ENCODE measurements at regions of chr13 and their contacts with region 1.

Region 1: DNA sequence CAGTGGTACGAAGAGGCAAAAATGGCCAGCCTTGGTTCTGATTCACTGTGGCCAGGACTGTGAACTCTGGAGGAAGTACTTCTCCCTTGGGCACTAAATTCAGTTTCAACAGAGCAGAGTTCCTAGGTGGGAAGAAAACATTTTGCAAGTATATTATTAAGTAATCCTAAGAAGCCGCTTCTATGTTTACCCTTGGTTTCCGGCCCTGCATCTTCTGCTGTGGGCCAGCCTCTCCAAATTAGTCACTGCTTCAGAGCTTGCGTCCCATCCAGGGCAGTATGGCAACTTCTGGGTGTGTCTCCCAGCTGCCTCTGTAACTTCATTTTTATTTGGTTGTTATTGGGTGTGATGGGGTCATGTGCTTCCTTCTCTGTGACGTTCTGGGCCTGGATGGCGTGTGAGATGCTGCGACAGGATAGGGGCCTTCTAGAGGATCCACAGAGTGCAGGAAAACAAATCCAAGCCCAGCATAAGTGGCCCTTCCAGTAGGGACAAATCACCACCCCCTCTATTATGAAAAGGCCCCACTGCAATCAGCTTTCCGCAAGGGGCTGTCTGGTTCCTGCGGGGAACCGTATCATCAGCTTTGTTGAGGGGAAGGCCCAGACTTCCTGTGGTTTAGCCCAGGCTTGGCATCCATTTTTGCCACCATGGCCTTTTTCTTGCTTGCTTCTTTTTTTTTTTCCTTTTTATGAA is 55.1 kb upstream of the C1QTNF9 start:
- DNase-seq: peak; percentile 78 to 93 (median 83)
- H3K4me3 ChIP-seq: peak overlapping the region; percentile 94 to 98
- H3K4me3 Mint-ChIP-seq: peak overlapping the region; percentile 92 to 99 (median 97)
- H3K27ac ChIP-seq: peak overlapping the region; percentile 87
- H3K27ac Mint-ChIP-seq: peak overlapping the region; percentile 95 to 100 (median 97)
- H3K4me1 ChIP-seq: peaks cover 88% of the 10 kb centered on the region
- H3K4me1 Mint-ChIP-seq: peaks cover 62 to 99% (median 81%) of the 10 kb centered on the region in 4 donors
- H3K27me3 ChIP-seq: no peaks in the 10 kb centered on the region
- H3K27me3 Mint-ChIP-seq: no peaks in the 10 kb centered on the region

Region 2: GRCh38 chr13:23639674-23640073 is 614.6 kb before region 1 on chr13:
- CTCF ChIA-PET with region 1: no interaction called
- POLR2A ChIA-PET with region 1: no interaction called
- intact Hi-C with region 1: no loop called
- DNase-seq: no peak
- H3K4me3 ChIP-seq: no peak overlapping the region
- H3K4me3 Mint-ChIP-seq: no peak overlapping the region
- H3K27ac ChIP-seq: no peak overlapping the region
- H3K27ac Mint-ChIP-seq: no peak overlapping the region
- H3K4me1 ChIP-seq: no peaks in the 10 kb centered on the region
- H3K4me1 Mint-ChIP-seq: no peaks in the 10 kb centered on the region
- H3K27me3 ChIP-seq: no peaks in the 10 kb centered on the region
- H3K27me3 Mint-ChIP-seq: no peaks in the 10 kb centered on the region

Region 3: GRCh38 chr13:24264976-24265375 is 10.7 kb after region 1 on chr13:
- CTCF ChIA-PET with region 1: interaction called, 310 read pairs
- POLR2A ChIA-PET with region 1: interaction called, 1,361 read pairs
- intact Hi-C with region 1: loop called (anchors 1 kb)
- DNase-seq: peak; percentile 83 to 93 (median 84)
- H3K4me3 ChIP-seq: peak overlapping the region; percentile 2 to 39
- H3K4me3 Mint-ChIP-seq: peak overlapping the region; percentile 68 to 92 (median 86)
- H3K27ac ChIP-seq: peak overlapping the region; percentile 73
- H3K27ac Mint-ChIP-seq: peak overlapping the region; percentile 98 to 99 (median 99)
- H3K4me1 ChIP-seq: peaks cover 100% of the 10 kb centered on the region
- H3K4me1 Mint-ChIP-seq: peaks cover 80 to 98% (median 88%) of the 10 kb centered on the region in 4 donors
- H3K27me3 ChIP-seq: no peaks in the 10 kb centered on the region
- H3K27me3 Mint-ChIP-seq: no peaks in the 10 kb centered on the region

Region 4: DNA sequence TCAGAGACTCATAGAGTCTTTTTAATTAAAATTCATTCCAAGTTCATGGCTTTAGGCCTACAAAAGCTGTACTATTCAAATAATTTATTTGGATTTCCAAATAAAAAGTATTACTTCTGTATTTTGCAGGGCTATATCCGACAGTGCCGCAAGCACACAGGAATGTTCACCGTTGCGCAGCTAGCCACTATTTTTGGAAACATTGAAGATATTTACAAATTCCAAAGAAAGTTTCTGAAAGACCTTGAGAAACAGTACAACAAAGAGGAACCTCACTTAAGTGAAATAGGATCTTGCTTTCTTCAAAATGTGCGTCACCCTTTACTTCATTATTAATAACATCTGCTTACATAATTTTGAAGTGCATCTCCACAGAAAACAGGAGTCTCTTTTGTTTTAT is 34.6 kb after region 1 on chr13:
- CTCF ChIA-PET with region 1: interaction called, 3 read pairs
- POLR2A ChIA-PET with region 1: interaction called, 1,361 read pairs
- intact Hi-C with region 1: loop called (anchors 5 kb)
- DNase-seq: no peak
- H3K4me3 ChIP-seq: no peak overlapping the region
- H3K4me3 Mint-ChIP-seq: no peak overlapping the region
- H3K27ac ChIP-seq: no peak overlapping the region
- H3K27ac Mint-ChIP-seq: no peak overlapping the region
- H3K4me1 ChIP-seq: no peaks in the 10 kb centered on the region
- H3K4me1 Mint-ChIP-seq: peaks cover 0 to 5% (median 4%) of the 10 kb centered on the region in 4 donors
- H3K27me3 ChIP-seq: no peaks in the 10 kb centered on the region
- H3K27me3 Mint-ChIP-seq: no peaks in the 10 kb centered on the region

Region 5: GRCh38 chr13:24443366-24443765 is 189.1 kb after region 1 on chr13:
- CTCF ChIA-PET with region 1: no interaction called
- POLR2A ChIA-PET with region 1: no interaction called
- intact Hi-C with region 1: loop called (anchors 10 kb)
- DNase-seq: no peak
- H3K4me3 ChIP-seq: no peak overlapping the region
- H3K4me3 Mint-ChIP-seq: no peak overlapping the region
- H3K27ac ChIP-seq: no peak overlapping the region
- H3K27ac Mint-ChIP-seq: no peak overlapping the region
- H3K4me1 ChIP-seq: no peaks in the 10 kb centered on the region
- H3K4me1 Mint-ChIP-seq: peaks cover 0 to 2% (median 0%) of the 10 kb centered on the region in 4 donors
- H3K27me3 ChIP-seq: no peaks in the 10 kb centered on the region
- H3K27me3 Mint-ChIP-seq: no peaks in the 10 kb centered on the region

Region 6: GRCh38 chr13:24512197-24512907 is 258.1 kb after region 1 on chr13 and contains the start of gene PARP4:
- CTCF ChIA-PET with region 1: no interaction called
- POLR2A ChIA-PET with region 1: interaction called, 7 read pairs
- intact Hi-C with region 1: loop called (anchors 5 kb)
- DNase-seq: peak; percentile 63 to 74 (median 72)
- H3K4me3 ChIP-seq: peak within 1 kb of the TSS; percentile 59
- H3K4me3 Mint-ChIP-seq: peak within 1 kb of the TSS; percentile 83 to 94 (median 92)
- H3K27ac ChIP-seq: peak within 1 kb of the TSS; percentile 77
- H3K27ac Mint-ChIP-seq: peak within 1 kb of the TSS; percentile 88 to 97 (median 92)
- H3K4me1 ChIP-seq: peaks cover 18% of the 10 kb centered on the region
- H3K4me1 Mint-ChIP-seq: peaks cover 18 to 46% (median 33%) of the 10 kb centered on the region in 4 donors
- H3K27me3 ChIP-seq: no peaks in the 10 kb centered on the region
- H3K27me3 Mint-ChIP-seq: no peaks in the 10 kb centered on the region
- total RNA-seq, gene PARP4: 90.0 to 92.9 TPM

Region 7: DNA sequence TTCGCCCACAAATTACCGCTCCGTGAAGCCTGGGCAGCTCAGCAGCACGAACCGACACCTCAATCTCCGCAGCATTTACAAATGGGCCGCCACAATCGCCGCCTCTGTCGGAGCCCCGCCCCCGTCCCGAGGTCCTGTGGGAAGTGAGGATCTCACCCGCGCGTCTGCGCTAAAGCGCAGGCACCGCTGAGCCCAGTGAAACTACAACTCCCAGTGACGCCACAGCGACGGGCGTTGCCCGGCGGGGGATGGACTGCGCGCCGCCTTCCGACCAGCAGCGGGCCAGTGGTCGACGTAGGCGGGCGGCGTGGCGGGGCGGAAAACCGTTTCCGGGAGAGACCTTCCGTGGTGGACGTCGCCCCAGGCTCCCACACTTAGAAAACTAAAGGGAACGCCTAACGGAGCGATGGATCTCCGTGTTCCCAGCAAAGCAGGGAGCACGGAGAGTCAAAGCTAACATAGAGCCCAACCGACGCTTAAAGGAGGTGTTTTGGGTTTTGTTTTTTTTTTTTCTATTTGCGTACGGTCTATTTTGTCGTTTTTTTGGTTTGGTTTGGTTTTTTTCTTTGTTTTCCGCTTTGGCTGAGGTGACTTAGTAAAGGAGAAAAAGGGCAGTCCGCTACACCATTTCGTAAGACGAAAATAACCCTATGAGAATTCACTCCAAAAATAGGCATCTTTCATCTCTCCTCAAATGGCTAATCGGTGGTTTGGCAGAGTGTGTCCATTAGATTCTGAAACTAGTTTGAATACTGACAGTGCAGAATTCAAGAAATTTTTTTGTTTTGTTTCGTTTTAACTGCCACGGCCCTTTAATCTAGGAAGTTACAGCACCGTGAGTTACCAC is 668.7 kb after region 1 on chr13:
- CTCF ChIA-PET with region 1: no interaction called
- POLR2A ChIA-PET with region 1: no interaction called
- intact Hi-C with region 1: loop called (anchors 2 kb)
- DNase-seq: peak; percentile 89 to 94 (median 91)
- H3K4me3 ChIP-seq: peak overlapping the region; percentile 64 to 95
- H3K4me3 Mint-ChIP-seq: peak overlapping the region; percentile 91 to 99 (median 97)
- H3K27ac ChIP-seq: peak overlapping the region; percentile 76
- H3K27ac Mint-ChIP-seq: peak overlapping the region; percentile 90 to 99 (median 96)
- H3K4me1 ChIP-seq: peaks cover 11% of the 10 kb centered on the region
- H3K4me1 Mint-ChIP-seq: peaks cover 9 to 17% (median 12%) of the 10 kb centered on the region in 4 donors
- H3K27me3 ChIP-seq: no peaks in the 10 kb centered on the region
- H3K27me3 Mint-ChIP-seq: no peaks in the 10 kb centered on the region